SK-N-SH (cell line): ENCODE measurements at regions of chr2 and their contacts with region 1.

Region 1: GRCh38 chr2:41869542-41870264 is 178.1 kb upstream of the PKDCC start:
- DNase-seq: peak; percentile 86
- H3K4me3 ChIP-seq: no peak overlapping the region; a peak in 1 of 4 replicates
- H3K27ac ChIP-seq: peak overlapping the region in 1 of 2 experiments; percentile 39; a peak in 1 of 4 replicates
- H3K4me1 ChIP-seq: peaks cover 0 to 26% of the 10 kb centered on the region in 2 experiments; a peak in 3 of 4 replicates
- H3K27me3 ChIP-seq: no peaks in the 10 kb centered on the region
- CTCF ChIP-seq: peak; percentile 91
- EP300 ChIP-seq: 0 out of 4 replicates have a peak, but pooled peaks of 1 of the 2 experiments have one; percentile 16
- RAD21 ChIP-seq: peak; percentile 100

Region 2: GRCh38 chr2:41886757-41887156 is 17.1 kb after region 1 on chr2:
- CTCF ChIA-PET with region 1: interaction called, 81 read pairs
- POLR2A ChIA-PET with region 1: interaction called, 8 read pairs
- DNase-seq: no peak
- H3K4me3 ChIP-seq: no peak overlapping the region
- H3K27ac ChIP-seq: peak overlapping the region in 1 of 2 experiments; percentile 100; a peak in 2 of 4 replicates
- H3K4me1 ChIP-seq: peaks cover 0 to 23% of the 10 kb centered on the region in 2 experiments; a peak in 2 of 4 replicates
- H3K27me3 ChIP-seq: peaks cover 5% of the 10 kb centered on the region; the same call in 1 of the 2 replicates
- CTCF ChIP-seq: no peak
- EP300 ChIP-seq: no peak
- RAD21 ChIP-seq: no peak

Region 3: DNA sequence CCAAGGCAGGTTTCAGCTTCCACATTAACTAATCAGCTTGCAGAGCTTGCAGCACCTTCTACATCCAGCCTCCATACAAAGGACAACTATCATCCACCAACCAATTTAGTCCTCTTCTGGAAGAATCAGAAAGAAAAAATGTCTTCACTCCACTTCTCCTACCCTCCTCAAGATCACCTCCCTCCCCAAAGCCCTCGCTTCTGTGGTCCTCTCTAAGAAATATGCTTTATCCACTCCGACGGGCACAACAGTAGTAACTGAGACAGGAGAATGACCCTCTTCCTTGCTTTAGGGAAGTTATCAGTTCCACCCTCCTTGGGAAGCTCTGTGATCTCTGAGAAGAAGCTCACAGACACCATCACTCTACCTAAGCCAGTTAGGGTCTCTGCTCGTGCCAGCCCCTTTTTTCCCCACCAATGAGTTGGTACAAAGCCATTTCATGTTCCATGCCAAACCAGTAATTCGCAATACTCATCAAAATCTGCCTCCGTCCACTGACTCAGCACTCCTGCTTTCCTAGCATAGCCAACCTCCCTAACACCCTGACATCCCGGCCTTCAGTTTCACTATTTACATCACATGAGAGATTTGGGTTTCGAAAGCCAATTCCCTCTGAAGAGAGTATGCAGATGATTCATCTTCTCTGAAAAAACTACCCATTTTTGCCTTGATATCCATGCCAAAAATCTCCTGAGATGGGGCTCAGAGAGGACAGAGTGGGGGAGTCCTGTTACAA is 64.0 kb after region 1 on chr2:
- CTCF ChIA-PET with region 1: interaction called, 15 read pairs
- POLR2A ChIA-PET with region 1: no interaction called
- DNase-seq: no peak
- H3K4me3 ChIP-seq: no peak overlapping the region
- H3K27ac ChIP-seq: no peak overlapping the region
- H3K4me1 ChIP-seq: peaks cover 13 to 50% of the 10 kb centered on the region in 2 experiments; a peak in 3 of 4 replicates
- H3K27me3 ChIP-seq: no peaks in the 10 kb centered on the region
- CTCF ChIP-seq: no peak
- EP300 ChIP-seq: no peak
- RAD21 ChIP-seq: no peak

Region 4: GRCh38 chr2:41955316-41956043 is 85.8 kb after region 1 on chr2:
- CTCF ChIA-PET with region 1: interaction called, 108 read pairs
- POLR2A ChIA-PET with region 1: interaction called, 15 read pairs
- DNase-seq: no peak
- H3K4me3 ChIP-seq: peak overlapping the region in 1 of 2 experiments; percentile 35; a peak in 2 of 4 replicates
- H3K27ac ChIP-seq: peak overlapping the region; percentile 36 to 99; a peak in 3 of 4 replicates
- H3K4me1 ChIP-seq: peaks cover 0 to 64% of the 10 kb centered on the region in 2 experiments; a peak in 2 of 4 replicates
- H3K27me3 ChIP-seq: no peaks in the 10 kb centered on the region; the same call in 1 of the 2 replicates
- CTCF ChIP-seq: no peak
- EP300 ChIP-seq: peak in 1 of 2 experiments; percentile 63; a peak in 2 of 4 replicates
- RAD21 ChIP-seq: peak; percentile 15; the same call in 1 of the 2 replicates

Region 5: GRCh38 chr2:42047488-42048298 is 178.0 kb after region 1 on chr2 and contains the start of gene PKDCC:
- CTCF ChIA-PET with region 1: interaction called, 193 read pairs
- POLR2A ChIA-PET with region 1: interaction called, 38 read pairs
- DNase-seq: peak; percentile 100
- H3K4me3 ChIP-seq: peak within 1 kb of the TSS; percentile 81 to 85
- H3K27ac ChIP-seq: peak within 1 kb of the TSS; percentile 5 to 100; a peak in 3 of 4 replicates
- H3K4me1 ChIP-seq: peaks cover 0 to 67% of the 10 kb centered on the region in 2 experiments; a peak in 2 of 4 replicates
- H3K27me3 ChIP-seq: 0 out of 2 replicates have a peak, but pooled peaks cover 8% of the 10 kb centered on the region
- CTCF ChIP-seq: no peak
- EP300 ChIP-seq: no peak
- RAD21 ChIP-seq: no peak
- polyA plus RNA-seq, gene PKDCC: 16.0 and 19.5 TPM in 2 replicates

Region 6: DNA sequence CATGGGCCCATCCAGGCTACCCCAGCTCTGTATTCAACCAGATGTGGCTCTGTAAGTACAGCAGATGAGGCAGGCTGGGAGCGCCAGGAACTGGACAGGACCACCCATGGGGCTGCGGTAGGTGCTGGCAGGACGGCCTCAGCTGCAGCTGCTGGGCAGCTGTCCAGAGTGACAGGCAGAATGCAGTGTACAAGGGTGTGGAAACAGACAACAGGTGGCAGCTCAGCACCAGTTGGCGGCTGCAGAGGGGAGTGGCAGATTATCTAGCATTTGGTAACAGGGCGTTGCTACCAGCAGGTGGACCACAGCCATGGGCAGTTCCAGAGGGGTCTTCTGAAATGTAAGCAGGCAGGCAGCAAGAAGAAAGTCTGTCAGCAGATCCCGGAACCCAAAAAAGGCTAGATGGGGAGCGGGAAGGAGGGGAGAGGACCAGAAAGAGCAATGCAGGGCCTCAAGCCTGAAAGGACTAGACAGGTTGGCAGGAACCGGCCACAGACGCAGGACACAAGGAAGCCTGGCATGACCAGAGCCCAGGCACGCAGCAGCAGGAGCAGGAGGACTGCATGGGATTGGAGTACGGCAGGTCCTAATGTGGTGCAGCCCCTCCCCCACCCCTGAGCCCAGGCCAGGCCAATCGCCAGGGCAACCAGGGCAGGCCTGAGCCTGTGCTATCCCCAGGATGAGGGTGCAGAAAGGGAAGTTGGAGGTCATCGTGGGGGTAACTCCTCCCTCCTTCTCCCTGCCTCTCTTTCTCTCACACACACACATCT is 202.8 kb after region 1 on chr2:
- CTCF ChIA-PET with region 1: interaction called, 897 read pairs
- POLR2A ChIA-PET with region 1: interaction called, 4 read pairs
- DNase-seq: peak; percentile 80
- H3K4me3 ChIP-seq: no peak overlapping the region
- H3K27ac ChIP-seq: peak overlapping the region in 1 of 2 experiments; percentile 76; a peak in 2 of 4 replicates
- H3K4me1 ChIP-seq: peaks cover 0 to 49% of the 10 kb centered on the region in 2 experiments; a peak in 1 of 4 replicates
- H3K27me3 ChIP-seq: peaks cover 17% of the 10 kb centered on the region
- CTCF ChIP-seq: no peak
- EP300 ChIP-seq: peak in 1 of 2 experiments; percentile 5; a peak in 2 of 4 replicates
- RAD21 ChIP-seq: peak; percentile 39